PC-3 (cell line): ENCODE measurements at regions of chr18 and their contacts with region 1.

Region 1: DNA sequence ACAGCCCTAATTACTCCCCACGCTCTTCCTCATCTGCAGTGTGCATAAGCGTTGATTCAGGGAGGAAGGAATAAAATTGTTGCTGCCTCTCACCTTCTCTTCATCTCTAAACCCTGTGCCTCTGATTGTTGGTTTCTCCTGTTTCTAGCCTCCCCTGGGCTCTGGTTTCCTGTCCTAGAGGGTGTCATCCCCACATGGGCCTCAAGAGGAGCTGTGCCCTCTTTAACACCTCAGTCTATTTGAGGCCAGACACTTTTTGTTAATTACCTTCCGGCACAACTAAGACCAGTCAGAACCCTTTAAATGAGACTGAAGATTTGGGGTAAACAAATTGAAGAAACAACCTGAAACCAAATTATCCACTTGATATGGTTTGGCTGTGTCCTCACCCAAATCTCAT is 9.7 kb downstream of the CTAGE1 start:
- DNase-seq: no peak
- ATAC-seq: no peak
- H3K4me3 ChIP-seq: no peak overlapping the region
- H3K27ac ChIP-seq: no peak overlapping the region
- H3K4me1 ChIP-seq: no peaks in the 10 kb centered on the region
- H3K27me3 ChIP-seq: no peaks in the 10 kb centered on the region
- CTCF ChIP-seq: peak; percentile 17; the same call in 1 of the 2 replicates

Region 2: DNA sequence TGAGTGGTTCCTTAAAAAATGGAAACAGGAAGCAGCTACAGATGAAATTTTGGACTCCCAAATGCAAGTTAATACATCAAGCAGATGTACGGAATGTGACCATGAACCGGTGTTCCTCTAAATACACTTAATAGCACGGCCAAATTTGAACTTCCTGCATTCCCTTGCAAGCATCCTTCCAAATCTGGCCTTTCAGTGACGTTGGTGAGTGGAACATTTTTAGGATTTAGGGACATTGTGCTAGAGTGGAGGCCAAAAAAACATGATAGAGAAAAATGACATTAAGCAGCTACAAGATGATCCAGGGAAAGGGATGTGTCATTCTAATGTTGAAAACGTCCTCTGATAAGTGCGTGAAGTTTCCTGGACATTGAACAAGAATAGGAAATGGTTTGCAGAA is 52.5 kb before region 1 on chr18:
- CTCF ChIA-PET with region 1: no interaction called
- POLR2A ChIA-PET with region 1: interaction called, 21 read pairs
- intact Hi-C with region 1: no loop called
- DNase-seq: no peak
- ATAC-seq: no peak
- H3K4me3 ChIP-seq: no peak overlapping the region
- H3K27ac ChIP-seq: no peak overlapping the region
- H3K4me1 ChIP-seq: peaks cover 14% of the 10 kb centered on the region
- H3K27me3 ChIP-seq: no peaks in the 10 kb centered on the region
- CTCF ChIP-seq: no peak